Heart left ventricle (tissue), 16 donors: ENCODE measurements at regions of chr4 and their contacts with region 1.

Region 1: DNA sequence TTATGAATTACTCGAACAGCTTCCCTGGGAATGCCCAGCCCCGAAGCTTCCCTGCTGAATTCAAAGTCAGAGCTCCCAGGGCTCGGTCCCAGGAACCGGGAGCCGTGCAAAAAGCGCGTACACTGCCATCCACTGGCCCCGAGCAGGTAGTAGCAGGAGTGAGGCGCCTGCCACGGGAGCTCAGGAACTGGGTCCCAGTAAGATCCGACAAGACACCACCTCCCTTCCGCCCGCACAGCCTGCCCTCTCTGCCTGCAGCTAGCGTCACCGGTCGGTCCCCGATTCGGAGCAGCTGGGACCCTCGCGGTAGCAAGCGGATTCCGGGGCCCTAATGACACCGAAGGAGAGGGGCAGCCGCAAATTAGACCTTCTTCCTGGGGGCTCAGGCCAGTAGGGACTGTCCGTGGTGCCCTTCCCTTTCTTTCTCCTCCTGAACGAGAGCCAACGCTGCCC is 1.2 kb downstream of the CORIN start:
- DNase-seq: peak; percentile 77 to 92 (median 85)
- ATAC-seq: peak; percentile 91 to 96 (median 96)
- H3K4me3 ChIP-seq: peak overlapping the region; percentile 41 to 81 (median 60)
- H3K27ac ChIP-seq: peak overlapping the region in 10 of 12 donors; percentile 49 to 87 (median 74)
- H3K4me1 ChIP-seq: peaks cover 0 to 39% (median 18%) of the 10 kb centered on the region in 12 donors
- H3K27me3 ChIP-seq: peaks cover 0 to 14% (median 0%) of the 10 kb centered on the region in 9 donors
- CTCF ChIP-seq: peak; percentile 49 to 79 (median 70)
- POLR2A ChIP-seq: peak in 1 of 2 donors; percentile 31

Region 2: DNA sequence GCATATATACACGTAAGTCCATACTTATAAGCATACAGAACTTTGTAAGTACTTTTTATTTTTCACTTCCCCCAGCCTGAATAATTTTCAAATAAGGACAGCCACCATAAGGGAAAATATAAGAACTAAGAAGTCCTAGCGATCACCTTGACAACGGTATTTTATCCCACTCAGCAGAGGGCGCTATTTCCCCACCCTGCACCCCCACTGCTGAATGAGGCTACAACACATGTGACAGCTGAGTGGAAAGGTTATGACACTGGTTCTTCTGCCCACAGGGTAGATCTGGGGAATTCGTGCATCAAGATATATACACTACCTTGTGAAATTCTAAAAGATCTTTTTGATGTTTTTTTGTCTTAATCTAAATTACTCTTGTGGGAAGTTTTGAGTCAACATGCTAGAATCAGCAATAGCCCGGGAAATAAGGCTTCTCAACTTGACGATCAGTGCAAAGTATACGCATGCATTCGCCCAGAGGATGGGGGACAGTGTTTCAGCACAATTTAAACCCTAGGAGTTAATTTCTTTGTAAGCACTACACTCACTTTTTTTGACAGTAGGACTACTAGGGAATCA is 150.3 kb before region 1 on chr4:
- intact Hi-C with region 1: loop called in 7 of 10 experiments (anchors 1 to 5 kb)
- DNase-seq: peak; percentile 18 to 49 (median 42)
- ATAC-seq: peak in 3 of 4 donors; percentile 69 to 83 (median 79)
- H3K4me3 ChIP-seq: no peak overlapping the region
- H3K27ac ChIP-seq: no peak overlapping the region
- H3K4me1 ChIP-seq: peaks cover 0 to 3% (median 0%) of the 10 kb centered on the region in 12 donors
- H3K27me3 ChIP-seq: no peaks in the 10 kb centered on the region
- CTCF ChIP-seq: peak; percentile 52 to 79 (median 67)
- POLR2A ChIP-seq: no peak

Region 3: DNA sequence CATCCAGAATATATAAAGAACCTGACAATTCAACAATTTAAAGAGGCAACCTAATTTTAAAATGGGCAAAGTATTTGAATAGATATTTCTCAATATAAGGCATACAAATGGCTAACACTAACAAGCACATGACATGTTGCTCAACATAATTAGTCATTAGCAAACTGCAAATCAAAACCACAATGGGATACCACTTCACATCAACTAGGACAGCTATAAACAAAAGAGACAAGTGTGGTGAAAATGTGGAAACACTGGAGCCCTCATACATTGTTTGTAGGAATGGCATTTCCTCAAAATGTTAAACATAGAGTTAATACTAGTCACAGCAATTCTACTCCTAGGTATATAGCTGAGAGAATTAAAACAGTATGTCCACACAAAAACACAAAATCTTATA is 95.5 kb before region 1 on chr4:
- intact Hi-C with region 1: loop called in 1 of 10 experiments (anchors 5 kb)
- DNase-seq: no peak
- ATAC-seq: no peak
- H3K4me3 ChIP-seq: no peak overlapping the region
- H3K27ac ChIP-seq: no peak overlapping the region
- H3K4me1 ChIP-seq: peaks cover 0 to 35% (median under 1%) of the 10 kb centered on the region in 12 donors
- H3K27me3 ChIP-seq: no peaks in the 10 kb centered on the region
- CTCF ChIP-seq: no peak
- POLR2A ChIP-seq: no peak

Region 4: DNA sequence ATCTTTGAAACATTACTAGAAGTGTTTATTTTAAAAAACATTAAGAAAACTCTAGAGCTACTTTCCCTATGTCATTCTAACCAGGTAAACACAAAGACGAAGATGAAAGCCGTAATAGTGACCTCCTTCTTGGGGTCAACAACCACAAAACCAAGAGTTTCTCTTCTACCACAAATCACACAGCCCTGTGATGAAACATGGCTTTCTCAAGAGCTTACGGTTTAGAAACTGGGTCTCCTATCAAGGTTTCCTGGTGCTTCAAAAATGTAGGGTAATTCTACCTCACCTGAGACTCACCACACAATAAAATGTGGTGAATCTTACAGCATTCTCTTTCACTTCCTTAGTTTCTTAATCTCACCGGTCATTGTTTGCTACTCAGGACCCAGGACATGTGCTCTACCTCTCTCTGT is 49.7 kb before region 1 on chr4:
- intact Hi-C with region 1: loop called in 1 of 10 experiments (anchors 2 kb)
- DNase-seq: no peak
- ATAC-seq: no peak
- H3K4me3 ChIP-seq: no peak overlapping the region
- H3K27ac ChIP-seq: peak overlapping the region in 1 of 12 donors; percentile 33
- H3K4me1 ChIP-seq: peaks cover 0 to 20% (median 0%) of the 10 kb centered on the region in 12 donors
- H3K27me3 ChIP-seq: no peaks in the 10 kb centered on the region
- CTCF ChIP-seq: no peak
- POLR2A ChIP-seq: no peak

Region 5: GRCh38 chr4:47954245-47954644 is 117.6 kb after region 1 on chr4:
- intact Hi-C with region 1: no loop called
- DNase-seq: no peak
- ATAC-seq: no peak
- H3K4me3 ChIP-seq: no peak overlapping the region
- H3K27ac ChIP-seq: no peak overlapping the region
- H3K4me1 ChIP-seq: no peaks in the 10 kb centered on the region
- H3K27me3 ChIP-seq: no peaks in the 10 kb centered on the region
- CTCF ChIP-seq: no peak
- POLR2A ChIP-seq: no peak